Vagina (tissue), 2 donors: ENCODE measurements at regions of chr17 and their contacts with region 1.

Region 1: GRCh38 chr17:82848022-82848592 is 8.3 kb upstream of the ZNF750 start:
- DNase-seq: no peak
- H3K4me3 ChIP-seq: peak overlapping the region; percentile 26 to 40
- H3K27ac ChIP-seq: peak overlapping the region; percentile 57
- H3K4me1 ChIP-seq: peaks cover 14% of the 10 kb centered on the region
- H3K27me3 ChIP-seq: no peaks in the 10 kb centered on the region
- CTCF ChIP-seq: no peak
- POLR2A ChIP-seq: no peak

Region 2: GRCh38 chr17:82794781-82795482 is 53.2 kb before region 1 on chr17:
- intact Hi-C with region 1: loop called (anchors 5 kb)
- DNase-seq: no peak
- H3K4me3 ChIP-seq: no peak overlapping the region
- H3K27ac ChIP-seq: peak overlapping the region; percentile 72
- H3K4me1 ChIP-seq: peaks cover 28% of the 10 kb centered on the region
- H3K27me3 ChIP-seq: no peaks in the 10 kb centered on the region
- CTCF ChIP-seq: no peak
- POLR2A ChIP-seq: no peak